ENCODE measurements at regions of chr13 and their contacts with region 1.

Region 1: DNA sequence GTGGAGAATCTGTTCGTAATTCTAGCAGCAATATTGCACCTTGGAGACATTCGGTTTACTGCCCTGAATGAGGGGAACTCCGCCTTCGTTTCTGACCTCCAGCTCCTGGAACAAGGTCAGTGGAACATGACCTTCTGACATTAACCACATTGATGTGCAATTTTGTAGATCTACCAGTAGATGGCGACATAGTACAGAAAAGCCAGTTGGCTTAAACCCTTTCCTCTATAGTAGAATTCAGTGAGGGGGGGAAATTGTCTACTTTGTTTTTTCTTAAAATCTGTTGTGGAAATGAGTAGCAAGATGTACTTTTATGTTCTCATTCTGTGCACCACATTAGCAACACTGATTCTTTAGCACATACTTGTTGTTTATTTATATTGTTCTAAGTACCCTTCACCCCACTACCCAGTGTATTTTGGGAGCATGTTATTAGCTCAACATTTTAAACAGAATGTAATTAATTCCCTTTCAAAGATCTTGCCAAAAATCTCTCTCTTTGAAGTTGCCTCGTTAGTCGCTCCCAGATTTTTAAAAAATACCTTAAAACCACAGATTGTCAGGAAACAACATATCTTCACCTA is 332.2 kb downstream of the MYO16 start:
- DNase-seq: peak; percentile 8 to 55
- H3K4me3 ChIP-seq: no peak overlapping the region
- H3K4me1 ChIP-seq: no peaks in the 10 kb centered on the region
- H3K27me3 ChIP-seq: no peaks in the 10 kb centered on the region

Region 2: GRCh38 chr13:108915634-108916512 is 45.8 kb before region 1 on chr13:
- in situ Hi-C with region 1: no loop called
- DNase-seq: peak in 1 of 2 experiments; percentile 33
- H3K4me3 ChIP-seq: no peak overlapping the region
- H3K4me1 ChIP-seq: no peaks in the 10 kb centered on the region
- H3K27me3 ChIP-seq: no peaks in the 10 kb centered on the region

Region 3: DNA sequence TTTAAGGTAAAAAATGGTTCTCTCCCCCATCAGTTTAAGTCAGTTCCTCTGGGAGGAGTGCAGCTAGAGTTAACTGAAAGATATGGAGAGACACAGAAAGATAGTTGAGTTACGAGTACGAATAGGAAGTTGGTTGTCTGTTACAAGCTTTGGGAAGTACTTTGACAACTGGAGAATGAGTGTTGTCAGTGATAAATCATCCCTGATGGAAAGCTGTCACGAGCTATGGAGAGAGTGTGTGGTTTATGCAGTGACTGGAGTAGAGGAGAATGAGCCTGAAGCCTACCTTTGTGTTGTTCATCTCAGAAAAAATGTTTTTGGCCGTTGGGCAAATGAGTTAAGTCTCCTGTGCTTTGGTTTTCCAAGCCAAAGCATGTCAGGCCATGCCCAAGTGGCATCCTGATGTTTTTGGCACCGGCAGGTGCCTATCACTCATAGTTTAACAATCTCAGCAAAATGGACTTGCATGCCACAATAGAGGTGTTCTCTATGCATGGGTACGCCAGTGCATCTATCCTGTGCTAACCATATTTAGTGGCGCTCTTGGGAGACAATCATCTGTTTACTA is 474.5 kb after region 1 on chr13:
- in situ Hi-C with region 1: no loop called
- DNase-seq: no peak
- H3K4me3 ChIP-seq: no peak overlapping the region
- H3K4me1 ChIP-seq: no peaks in the 10 kb centered on the region
- H3K27me3 ChIP-seq: no peaks in the 10 kb centered on the region

Region 4: GRCh38 chr13:110116072-110116487 is 1154.4 kb after region 1 on chr13:
- in situ Hi-C with region 1: loop called (anchors 10 kb)
- DNase-seq: peak; percentile 46 to 79
- H3K4me3 ChIP-seq: no peak overlapping the region
- H3K4me1 ChIP-seq: no peaks in the 10 kb centered on the region
- H3K27me3 ChIP-seq: 0 out of 2 replicates have a peak, but pooled peaks cover 3% of the 10 kb centered on the region

Region 5: DNA sequence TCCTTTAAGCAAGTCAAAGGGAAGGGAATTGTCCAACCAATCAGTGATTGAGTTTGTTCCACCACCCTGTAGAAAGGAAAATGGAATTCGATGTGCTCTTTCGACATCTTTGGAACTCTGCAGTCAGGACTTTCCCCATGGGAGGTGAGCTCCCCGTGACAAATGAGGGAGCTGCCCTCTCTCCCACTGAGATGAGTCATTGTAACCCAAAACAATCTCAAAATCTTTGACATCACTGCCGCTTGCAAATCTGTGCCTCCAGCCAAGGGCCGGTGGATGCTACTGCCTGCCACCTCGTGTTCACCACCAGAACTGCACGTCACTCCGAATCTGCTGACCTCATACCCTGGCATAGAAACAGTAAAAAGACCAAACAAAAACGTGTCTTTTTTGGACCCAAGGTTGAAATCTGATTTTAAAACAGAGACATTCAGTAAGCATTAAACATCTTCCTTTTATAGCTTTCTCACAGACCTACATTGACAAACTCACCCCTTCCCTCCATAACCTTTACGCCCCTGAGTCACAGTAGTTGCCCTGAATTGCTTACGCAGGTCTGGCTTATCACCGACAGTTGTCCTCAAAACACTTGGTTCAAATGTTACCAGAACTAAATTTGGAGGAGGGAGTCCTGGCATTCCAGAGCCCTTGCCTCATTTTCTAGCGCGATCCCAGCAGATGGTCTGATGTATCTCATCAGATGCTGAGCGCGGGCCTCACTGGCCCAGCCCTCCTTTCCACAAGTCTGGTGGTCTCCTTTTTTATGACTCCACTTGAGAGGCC is 1450.7 kb after region 1 on chr13:
- in situ Hi-C with region 1: loop called (anchors 25 kb)
- DNase-seq: peak; percentile 19 to 74
- H3K4me3 ChIP-seq: no peak overlapping the region
- H3K4me1 ChIP-seq: no peaks in the 10 kb centered on the region
- H3K27me3 ChIP-seq: no peaks in the 10 kb centered on the region

Measured in HAP-1 (cell line).